ENCODE measurements at regions of chr20 and their contacts with region 1.

Region 1: GRCh38 chr20:2651772-2652723 is at the start of gene NOP56:
- DNase-seq: peak; percentile 88
- ATAC-seq: peak; percentile 93
- H3K4me3 ChIP-seq: peak within 1 kb of the TSS; percentile 83 to 97 (median 94)
- H3K27ac ChIP-seq: peak within 1 kb of the TSS; percentile 90
- H3K4me1 ChIP-seq: peaks cover 43% of the 10 kb centered on the region
- H3K27me3 ChIP-seq: no peaks in the 10 kb centered on the region; a peak in 1 of 5 replicates
- CTCF ChIP-seq: no peak; the same call in 1 of the 2 replicates
- EP300 ChIP-seq: peak in 1 of 2 experiments; percentile 50; a peak in 2 of 4 replicates
- POLR2A ChIP-seq: peak; percentile 91 to 99
- RAD21 ChIP-seq: peak; percentile 59
- total RNA-seq, gene NOP56: 646 and 1,116 TPM in 2 replicates

Region 2: GRCh38 chr20:2476742-2477615 is 175.1 kb before region 1 on chr20:
- CTCF ChIA-PET with region 1: no interaction called
- POLR2A ChIA-PET with region 1: interaction called, 10 read pairs
- in situ Hi-C with region 1: no loop called
- intact Hi-C with region 1: no loop called
- DNase-seq: peak; percentile 60
- ATAC-seq: peak; percentile 76
- H3K4me3 ChIP-seq: no peak overlapping the region
- H3K27ac ChIP-seq: peak overlapping the region; percentile 54
- H3K4me1 ChIP-seq: peaks cover 28% of the 10 kb centered on the region
- H3K27me3 ChIP-seq: no peaks in the 10 kb centered on the region
- CTCF ChIP-seq: peak; percentile 80
- EP300 ChIP-seq: no peak
- POLR2A ChIP-seq: no peak
- RAD21 ChIP-seq: no peak

Region 3: GRCh38 chr20:2523919-2524708 is 127.9 kb before region 1 on chr20:
- CTCF ChIA-PET with region 1: interaction called, 4 read pairs
- POLR2A ChIA-PET with region 1: interaction called, 12 read pairs
- in situ Hi-C with region 1: no loop called
- intact Hi-C with region 1: loop called (anchors 2 kb)
- DNase-seq: peak; percentile 77
- ATAC-seq: peak; percentile 81
- H3K4me3 ChIP-seq: peak overlapping the region; percentile 80 to 88 (median 80)
- H3K27ac ChIP-seq: peak overlapping the region; percentile 22
- H3K4me1 ChIP-seq: peaks cover 24% of the 10 kb centered on the region
- H3K27me3 ChIP-seq: peaks cover 0 to 36% of the 10 kb centered on the region in 2 experiments; a peak in 2 of 5 replicates
- CTCF ChIP-seq: peak; percentile 99
- EP300 ChIP-seq: no peak; a peak in 1 of 4 replicates
- POLR2A ChIP-seq: peak; percentile 62 to 76
- RAD21 ChIP-seq: peak; percentile 76

Region 4: DNA sequence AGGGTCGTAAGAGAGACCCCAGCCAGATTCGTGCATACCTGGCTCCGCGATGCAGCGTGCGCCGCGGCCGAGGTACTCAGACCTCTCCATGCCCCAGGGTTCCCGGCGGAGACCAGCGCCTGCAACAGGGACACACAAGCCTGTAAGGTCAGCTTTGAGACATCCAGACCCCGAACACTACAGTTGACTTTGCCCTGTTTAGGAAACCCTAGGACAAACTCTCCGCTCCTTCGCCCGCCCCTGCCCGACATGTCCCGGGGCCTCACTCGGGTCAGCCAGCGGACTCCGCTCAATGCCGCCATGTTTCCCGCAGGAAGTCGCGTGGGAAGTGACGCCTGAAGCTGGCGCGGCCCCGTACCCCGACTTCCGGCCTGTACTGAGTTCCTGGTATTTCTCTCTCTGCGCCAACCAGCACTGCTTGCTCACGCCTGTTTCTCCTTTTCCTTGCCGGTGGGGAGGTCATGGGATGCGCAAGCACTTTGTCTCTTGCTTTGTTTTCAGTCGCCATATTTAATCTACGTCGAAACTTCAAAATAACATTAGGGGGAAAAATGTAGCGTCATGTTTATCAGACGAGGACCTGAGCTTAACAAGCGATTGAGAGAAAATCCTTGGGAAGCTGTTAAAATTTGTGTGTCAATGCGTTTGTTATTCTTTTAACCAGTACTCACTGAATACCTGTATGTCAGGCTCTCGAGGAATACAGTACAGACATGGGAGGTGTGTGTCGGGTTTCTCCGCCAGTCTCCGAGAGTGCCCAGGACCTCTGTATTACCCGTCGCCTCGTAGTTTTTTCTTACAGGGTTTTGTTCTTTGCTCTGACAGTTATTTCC is 12.1 kb after region 1 on chr20 and contains the start of gene IDH3B:
- CTCF ChIA-PET with region 1: no interaction called
- POLR2A ChIA-PET with region 1: interaction called, 151 read pairs
- in situ Hi-C with region 1: no loop called
- intact Hi-C with region 1: no loop called
- DNase-seq: peak; percentile 96
- ATAC-seq: peak; percentile 82
- H3K4me3 ChIP-seq: peak within 1 kb of the TSS; percentile 92 to 99 (median 92)
- H3K27ac ChIP-seq: peak within 1 kb of the TSS; percentile 87
- H3K4me1 ChIP-seq: peaks cover 28% of the 10 kb centered on the region
- H3K27me3 ChIP-seq: peaks cover 0 to 14% of the 10 kb centered on the region in 2 experiments; a peak in 3 of 5 replicates
- CTCF ChIP-seq: peak; percentile 22
- EP300 ChIP-seq: peak; percentile 45 to 61; a peak in 3 of 4 replicates
- POLR2A ChIP-seq: peak; percentile 94 to 95
- RAD21 ChIP-seq: peak; percentile 45
- total RNA-seq, gene IDH3B: 215 and 246 TPM in 2 replicates

Region 5: DNA sequence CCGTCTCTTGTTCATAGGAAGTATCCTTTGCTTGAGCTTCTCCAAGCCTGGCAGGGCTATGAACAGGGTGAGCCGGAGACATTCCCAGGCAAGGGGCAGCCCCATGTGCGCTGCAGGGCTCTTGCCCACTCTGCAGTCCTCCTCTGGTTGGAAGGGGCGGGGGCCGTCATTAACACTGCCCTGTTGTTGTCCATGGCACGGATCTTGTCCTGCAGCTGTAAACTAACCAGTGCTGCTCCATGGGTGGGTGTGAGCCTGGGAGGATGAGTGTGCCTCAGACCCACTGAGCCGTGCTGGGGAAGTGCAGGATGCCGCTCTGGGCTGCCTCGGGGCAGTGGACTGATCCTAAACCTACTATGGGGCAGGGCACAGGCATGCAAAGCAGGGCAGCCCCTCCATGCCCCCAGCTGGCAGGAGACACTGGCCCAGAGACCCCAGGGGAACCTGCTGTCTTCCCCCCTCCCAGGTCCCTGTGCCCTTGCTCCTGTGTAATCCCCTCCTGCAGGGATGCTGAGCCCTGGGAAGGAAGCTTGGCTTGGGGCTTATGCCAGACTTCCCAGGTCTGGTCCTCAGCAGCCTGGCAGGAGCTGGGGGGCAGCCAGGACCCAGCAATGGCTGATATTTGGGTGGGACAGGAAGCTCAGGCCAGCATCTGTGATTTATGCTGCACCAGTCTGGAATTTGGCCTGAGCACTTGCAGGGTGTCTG is 49.0 kb after region 1 on chr20:
- CTCF ChIA-PET with region 1: no interaction called
- POLR2A ChIA-PET with region 1: no interaction called
- in situ Hi-C with region 1: no loop called
- intact Hi-C with region 1: no loop called
- DNase-seq: no peak
- ATAC-seq: peak; percentile 14; the same call in 2 of the 3 replicates
- H3K4me3 ChIP-seq: no peak overlapping the region
- H3K27ac ChIP-seq: no peak overlapping the region
- H3K4me1 ChIP-seq: peaks cover 20% of the 10 kb centered on the region; the same call in 1 of the 2 replicates
- H3K27me3 ChIP-seq: peaks cover 29 to 82% of the 10 kb centered on the region in 2 experiments
- CTCF ChIP-seq: no peak
- EP300 ChIP-seq: no peak
- POLR2A ChIP-seq: no peak
- RAD21 ChIP-seq: no peak

Region 6: DNA sequence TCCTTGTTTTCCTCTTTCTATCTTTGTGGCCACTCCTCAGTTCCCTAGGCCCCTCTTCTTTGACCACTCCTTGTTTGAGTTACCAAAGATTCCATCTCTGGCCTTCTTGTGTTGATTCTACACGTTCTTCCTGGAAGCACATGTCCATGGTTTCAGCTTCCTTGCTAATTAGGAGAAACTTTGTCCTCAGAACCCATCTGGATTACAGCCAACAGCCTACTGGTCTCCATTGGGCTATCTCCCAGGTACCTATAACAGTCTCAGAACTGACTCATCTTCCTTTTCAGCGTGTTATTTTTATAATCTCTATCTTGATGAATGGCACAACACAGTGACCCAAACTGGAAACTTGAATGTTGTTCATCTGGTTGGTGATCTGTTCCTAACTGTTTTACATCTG is 238.7 kb after region 1 on chr20:
- CTCF ChIA-PET with region 1: no interaction called
- POLR2A ChIA-PET with region 1: no interaction called
- in situ Hi-C with region 1: no loop called
- intact Hi-C with region 1: no loop called
- DNase-seq: no peak
- ATAC-seq: no peak
- H3K4me3 ChIP-seq: no peak overlapping the region
- H3K27ac ChIP-seq: no peak overlapping the region
- H3K4me1 ChIP-seq: peaks cover 26% of the 10 kb centered on the region
- H3K27me3 ChIP-seq: no peaks in the 10 kb centered on the region
- CTCF ChIP-seq: no peak
- EP300 ChIP-seq: no peak
- POLR2A ChIP-seq: no peak
- RAD21 ChIP-seq: no peak